ENCODE measurements at regions of chr6 and their contacts with region 1.

Region 1: GRCh38 chr6:2988426-2989331 is 11.0 kb upstream of the NQO2 start:
- DNase-seq: peak; percentile 92
- H3K4me3 ChIP-seq: peak overlapping the region; percentile 63 to 83 (median 69)
- H3K27ac ChIP-seq: peak overlapping the region; percentile 99
- H3K4me1 ChIP-seq: peaks cover 32% of the 10 kb centered on the region
- H3K27me3 ChIP-seq: no peaks in the 10 kb centered on the region
- CTCF ChIP-seq: peak; percentile 50 to 89

Region 2: DNA sequence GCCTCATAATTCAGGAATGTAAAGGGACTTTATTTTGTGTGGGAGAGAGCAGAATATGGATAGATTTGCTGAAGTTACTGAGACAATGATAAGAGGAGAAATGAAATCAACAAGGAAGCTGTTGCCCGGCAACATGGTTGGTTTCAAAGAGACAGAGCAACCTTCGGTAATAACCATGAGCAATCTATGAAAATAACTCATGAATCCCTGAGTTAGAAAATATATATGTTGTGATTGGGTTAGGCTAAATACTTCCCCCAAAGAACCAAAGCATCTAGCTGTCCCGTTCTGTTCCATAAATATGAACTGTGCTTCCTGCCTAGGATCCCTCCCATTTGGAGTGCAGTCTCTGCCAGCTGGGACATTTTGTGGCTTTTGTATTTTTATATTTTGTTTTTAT is 170.1 kb before region 1 on chr6:
- CTCF ChIA-PET with region 1: no interaction called
- dilution Hi-C with region 1: no loop called
- in situ Hi-C with region 1: no loop called
- intact Hi-C with region 1: no loop called
- DNase-seq: peak; percentile 84
- H3K4me3 ChIP-seq: peak overlapping the region in 1 of 3 experiments; percentile 6
- H3K27ac ChIP-seq: peak overlapping the region; percentile 99
- H3K4me1 ChIP-seq: peaks cover 26% of the 10 kb centered on the region
- H3K27me3 ChIP-seq: no peaks in the 10 kb centered on the region
- CTCF ChIP-seq: no peak

Region 3: GRCh38 chr6:2841264-2842138 is 147.2 kb before region 1 on chr6 and contains the start of gene SERPINB1:
- CTCF ChIA-PET with region 1: no interaction called
- dilution Hi-C with region 1: loop called (anchors 5 kb)
- in situ Hi-C with region 1: no loop called
- intact Hi-C with region 1: loop called (anchors 1 kb)
- DNase-seq: peak; percentile 86
- H3K4me3 ChIP-seq: peak within 1 kb of the TSS; percentile 47 to 59 (median 55)
- H3K27ac ChIP-seq: peak within 1 kb of the TSS; percentile 91
- H3K4me1 ChIP-seq: peaks cover 46% of the 10 kb centered on the region
- H3K27me3 ChIP-seq: no peaks in the 10 kb centered on the region
- CTCF ChIP-seq: no peak
- total RNA-seq, gene SERPINB1: 17.0 to 40.0 TPM

Region 4: GRCh38 chr6:2931970-2932748 is 56.5 kb before region 1 on chr6:
- CTCF ChIA-PET with region 1: interaction called, 6 read pairs
- dilution Hi-C with region 1: no loop called
- in situ Hi-C with region 1: no loop called
- intact Hi-C with region 1: loop called (anchors 5 kb)
- DNase-seq: peak; percentile 73
- H3K4me3 ChIP-seq: no peak overlapping the region
- H3K27ac ChIP-seq: no peak overlapping the region
- H3K4me1 ChIP-seq: no peaks in the 10 kb centered on the region
- H3K27me3 ChIP-seq: peaks cover 3% of the 10 kb centered on the region
- CTCF ChIP-seq: peak; percentile 98 to 99

Region 5: DNA sequence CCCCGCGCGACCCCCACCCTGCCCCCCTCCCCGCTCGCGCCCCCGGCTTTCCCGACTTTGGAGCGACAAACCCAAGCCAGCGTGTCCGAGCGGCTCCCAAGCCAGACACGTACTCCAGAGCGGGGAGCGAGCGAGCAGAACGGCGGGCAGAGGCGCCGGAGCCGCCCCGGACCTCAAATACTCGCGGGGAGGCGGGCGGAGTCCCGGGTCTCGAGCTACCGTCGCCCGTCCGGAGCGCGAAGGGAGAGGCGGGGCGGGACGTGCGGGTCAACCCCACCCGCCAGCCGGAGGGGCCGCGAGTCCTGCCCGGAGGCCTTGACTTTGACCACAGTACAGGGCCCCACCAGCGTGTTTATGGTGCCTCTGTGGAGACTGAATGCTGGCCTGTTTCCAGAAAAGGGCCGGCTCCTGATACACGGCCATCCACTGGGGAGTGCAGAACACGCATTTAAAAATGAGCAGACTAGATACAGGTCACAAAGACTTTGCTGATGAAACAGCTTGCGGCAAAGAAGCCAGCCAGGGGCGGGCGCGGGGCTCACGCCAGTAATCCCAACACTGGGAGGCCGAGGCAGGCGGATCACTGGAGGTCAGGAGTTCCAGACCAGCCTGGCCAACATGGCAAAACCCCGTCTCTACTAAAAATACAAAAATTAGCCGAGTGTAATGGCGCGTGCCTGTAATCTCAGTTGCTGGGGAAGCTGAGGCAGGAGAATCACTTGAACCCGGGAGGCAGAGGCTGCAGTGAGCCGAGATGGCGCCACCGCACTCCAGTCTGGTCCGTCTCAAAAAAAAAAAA is 17.1 kb before region 1 on chr6 and contains the start of gene SERPINB6:
- CTCF ChIA-PET with region 1: no interaction called
- dilution Hi-C with region 1: no loop called
- in situ Hi-C with region 1: no loop called
- intact Hi-C with region 1: loop called (anchors 1 kb)
- DNase-seq: peak; percentile 36
- H3K4me3 ChIP-seq: peak within 1 kb of the TSS; percentile 65 to 70 (median 67)
- H3K27ac ChIP-seq: peak within 1 kb of the TSS; percentile 72
- H3K4me1 ChIP-seq: peaks cover 15% of the 10 kb centered on the region
- H3K27me3 ChIP-seq: no peaks in the 10 kb centered on the region
- CTCF ChIP-seq: no peak
- total RNA-seq, gene SERPINB6: 70.0 to 93.3 TPM

Region 6: DNA sequence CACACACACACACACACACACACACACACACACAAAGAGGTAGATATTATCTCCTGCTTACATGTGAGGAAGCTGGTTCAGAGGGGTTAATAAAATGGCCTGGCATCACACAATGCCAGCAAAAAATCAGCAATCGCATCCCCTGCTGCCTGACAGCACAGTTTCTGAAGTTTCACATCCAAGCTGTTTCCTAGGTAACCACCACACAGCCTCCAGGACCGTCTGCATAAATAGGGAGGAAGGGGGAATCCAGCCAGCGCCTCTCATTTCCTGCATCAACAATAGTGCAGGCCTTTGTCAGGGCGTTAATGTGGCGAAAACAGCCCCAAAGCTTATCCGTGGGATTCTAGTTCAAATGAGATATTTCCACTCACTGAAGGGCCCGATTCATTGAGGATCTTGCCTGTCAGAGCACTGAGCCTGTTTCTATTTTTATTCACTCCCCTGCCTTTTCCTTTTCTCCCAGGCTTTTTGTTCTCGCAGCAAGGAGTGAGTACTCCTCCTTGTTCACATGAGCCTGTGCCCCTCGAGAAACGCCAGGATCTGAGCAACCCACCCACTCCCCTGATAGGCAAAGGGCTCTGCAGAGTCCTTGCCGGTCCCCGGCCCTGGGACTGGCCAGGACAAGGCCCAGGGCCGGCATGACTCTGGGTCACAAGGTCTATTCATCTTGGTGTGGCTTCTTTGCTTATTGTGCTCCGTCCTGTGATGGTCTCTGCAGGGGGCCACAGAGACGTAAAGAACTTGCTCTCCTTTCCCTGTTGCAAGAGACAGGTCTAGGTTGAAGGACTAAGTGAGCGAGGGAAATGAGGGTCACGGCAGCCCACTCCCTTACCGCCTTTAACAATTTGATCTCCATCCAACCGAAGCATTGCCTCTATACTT is 206.1 kb after region 1 on chr6:
- CTCF ChIA-PET with region 1: no interaction called
- dilution Hi-C with region 1: no loop called
- in situ Hi-C with region 1: no loop called
- intact Hi-C with region 1: no loop called
- DNase-seq: no peak
- H3K4me3 ChIP-seq: no peak overlapping the region
- H3K27ac ChIP-seq: no peak overlapping the region
- H3K4me1 ChIP-seq: no peaks in the 10 kb centered on the region
- H3K27me3 ChIP-seq: no peaks in the 10 kb centered on the region
- CTCF ChIP-seq: no peak

Region 7: GRCh38 chr6:3258720-3259490 is 270.2 kb after region 1 on chr6 and contains the start of gene PSMG4:
- CTCF ChIA-PET with region 1: no interaction called
- dilution Hi-C with region 1: no loop called
- in situ Hi-C with region 1: loop called in 1 of 2 experiments (anchors 10 kb)
- intact Hi-C with region 1: no loop called
- DNase-seq: peak; percentile 86
- H3K4me3 ChIP-seq: peak within 1 kb of the TSS; percentile 56 to 97 (median 95)
- H3K27ac ChIP-seq: peak within 1 kb of the TSS; percentile 41
- H3K4me1 ChIP-seq: peaks cover 12% of the 10 kb centered on the region
- H3K27me3 ChIP-seq: no peaks in the 10 kb centered on the region
- CTCF ChIP-seq: no peak
- total RNA-seq, gene PSMG4: 14.3 to 29.9 TPM

Region 8: GRCh38 chr6:3630258-3630835 is 641.7 kb after region 1 on chr6:
- CTCF ChIA-PET with region 1: no interaction called
- dilution Hi-C with region 1: no loop called
- in situ Hi-C with region 1: no loop called
- intact Hi-C with region 1: no loop called
- DNase-seq: no peak
- H3K4me3 ChIP-seq: no peak overlapping the region
- H3K27ac ChIP-seq: no peak overlapping the region
- H3K4me1 ChIP-seq: peaks cover 12% of the 10 kb centered on the region
- H3K27me3 ChIP-seq: no peaks in the 10 kb centered on the region
- CTCF ChIP-seq: no peak